K562 (cell line): ENCODE measurements at regions of chr7 and their contacts with region 1.

Region 1: DNA sequence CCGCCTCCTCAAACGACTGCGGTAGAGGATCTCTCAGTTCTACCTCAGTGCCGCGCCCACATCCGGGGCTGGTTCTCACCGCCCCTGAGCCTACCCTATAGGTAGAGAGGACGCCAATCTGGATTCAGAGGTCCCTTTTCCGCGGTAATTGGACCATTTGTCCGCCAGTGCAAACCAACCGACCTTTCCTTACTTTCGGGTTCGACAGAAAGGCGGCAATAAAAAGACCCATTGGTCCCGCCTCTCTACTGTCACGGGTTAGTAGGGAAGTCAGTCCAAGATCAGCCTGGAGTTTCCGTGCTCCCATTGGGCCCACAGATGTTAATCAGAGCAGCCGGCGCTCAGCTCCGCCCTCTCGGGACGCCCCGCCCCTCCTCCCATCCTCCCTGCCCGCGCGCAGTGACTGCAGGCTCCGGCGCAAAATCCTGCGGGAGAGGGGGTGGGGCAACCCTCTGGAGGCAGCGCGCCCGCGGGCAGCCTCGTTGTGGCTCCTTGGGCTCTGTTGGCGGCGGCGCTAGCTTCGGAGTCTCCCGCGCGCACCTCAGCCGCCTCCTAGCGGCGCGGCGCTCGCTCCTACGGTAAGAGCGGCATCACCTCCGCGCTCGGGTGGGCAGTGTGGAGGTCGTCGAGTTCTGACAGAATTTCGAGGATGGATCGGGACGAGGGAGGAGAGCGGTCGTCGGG is at the starts of genes PHTF2 and TMEM60:
- DNase-seq: peak; percentile 96 to 99 (median 97)
- ATAC-seq: peak; percentile 90
- H3K4me3 ChIP-seq: peak within 1 kb of the TSS; percentile 75
- H3K27ac ChIP-seq: peak within 1 kb of the TSS; percentile 86
- H3K4me1 ChIP-seq: peaks cover 16 to 24% of the 10 kb centered on the region in 2 experiments; a peak in 4 of 5 replicates
- H3K27me3 ChIP-seq: no peaks in the 10 kb centered on the region
- CTCF ChIP-seq: peak; percentile 55 to 69 (median 64)
- EP300 ChIP-seq: peak; percentile 47; the same call in 1 of the 2 replicates
- POLR2A ChIP-seq: peak; percentile 76
- RAD21 ChIP-seq: peak; percentile 47 to 60
- polyA plus RNA-seq, gene PHTF2: 17.9 to 18.2 TPM
- polyA plus RNA-seq, gene TMEM60: 136 to 140 TPM

Region 2: DNA sequence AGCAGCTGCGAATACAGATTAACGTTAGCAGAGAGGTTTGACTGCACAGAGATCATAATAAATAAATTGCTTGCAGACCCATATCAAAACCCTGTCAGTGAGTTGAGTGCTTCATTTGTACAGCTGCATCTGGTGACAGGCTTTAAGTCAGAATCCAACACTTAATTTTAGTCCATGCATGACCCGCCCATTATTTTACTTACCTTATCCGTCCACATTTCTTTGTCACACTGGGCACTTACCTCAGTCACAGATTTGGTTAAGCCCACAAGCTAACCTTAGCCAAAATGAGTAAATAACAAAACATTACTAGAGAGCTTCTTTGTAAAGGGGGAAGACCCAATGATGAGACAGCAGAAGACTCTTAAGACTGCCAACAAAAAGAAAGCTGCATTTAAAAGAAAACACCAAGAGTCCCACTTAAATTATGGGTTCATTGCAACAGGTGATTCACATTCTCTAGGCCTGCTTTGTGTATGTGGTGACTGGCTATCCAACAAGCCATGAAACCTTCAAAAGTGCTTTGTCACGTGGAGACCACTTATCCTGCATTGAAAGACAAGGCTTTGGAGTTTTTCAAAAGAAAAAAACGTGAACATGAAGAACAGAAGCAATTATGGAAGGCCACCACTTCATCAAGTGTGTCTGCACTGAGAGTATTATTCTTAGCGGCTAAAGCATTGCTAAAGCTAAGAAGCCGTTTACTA is 32.3 kb after region 1 on chr7:
- CTCF ChIA-PET with region 1: no interaction called
- POLR2A ChIA-PET with region 1: interaction called, 7 read pairs
- in situ Hi-C with region 1: no loop called
- intact Hi-C with region 1: loop called (anchors 1 kb)
- DNase-seq: peak in 1 of 4 experiments; percentile 62
- ATAC-seq: peak; percentile 55
- H3K4me3 ChIP-seq: no peak overlapping the region
- H3K27ac ChIP-seq: peak overlapping the region; percentile 58; the same call in 2 of the 3 replicates
- H3K4me1 ChIP-seq: peaks cover 4 to 51% of the 10 kb centered on the region in 2 experiments; a peak in 4 of 5 replicates
- H3K27me3 ChIP-seq: no peaks in the 10 kb centered on the region
- CTCF ChIP-seq: no peak
- EP300 ChIP-seq: no peak
- POLR2A ChIP-seq: no peak
- RAD21 ChIP-seq: no peak

Region 3: GRCh38 chr7:77843194-77843593 is 44.7 kb after region 1 on chr7:
- CTCF ChIA-PET with region 1: no interaction called
- POLR2A ChIA-PET with region 1: interaction called, 4 read pairs
- in situ Hi-C with region 1: no loop called
- intact Hi-C with region 1: loop called (anchors 2 kb)
- DNase-seq: peak in 1 of 4 experiments; percentile 63
- ATAC-seq: peak; percentile 19
- H3K4me3 ChIP-seq: no peak overlapping the region
- H3K27ac ChIP-seq: peak overlapping the region; percentile 50; the same call in 1 of the 3 replicates
- H3K4me1 ChIP-seq: peaks cover 12 to 35% of the 10 kb centered on the region in 2 experiments
- H3K27me3 ChIP-seq: no peaks in the 10 kb centered on the region
- CTCF ChIP-seq: no peak
- EP300 ChIP-seq: 0 out of 2 replicates have a peak, but pooled peaks have one; percentile 20
- POLR2A ChIP-seq: no peak
- RAD21 ChIP-seq: no peak

Region 4: DNA sequence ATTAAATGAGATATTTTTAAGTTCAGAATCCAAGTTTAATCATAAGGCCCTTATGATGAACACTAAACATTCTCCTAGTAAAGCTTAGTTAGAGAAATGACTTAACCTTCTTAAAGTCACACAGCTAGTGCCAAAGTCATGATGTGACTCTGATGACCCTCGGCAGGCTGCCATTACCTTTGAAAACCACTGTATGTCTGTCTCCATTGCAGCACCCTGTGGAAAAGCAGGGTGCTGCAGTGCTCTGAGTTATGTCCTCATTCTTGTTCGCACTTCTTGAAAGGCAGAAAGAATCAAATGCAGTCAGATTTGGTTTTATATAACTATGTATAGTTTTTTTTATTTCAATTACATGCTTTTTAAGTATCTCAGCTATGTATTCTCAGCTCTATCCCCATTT is 105.1 kb after region 1 on chr7:
- CTCF ChIA-PET with region 1: no interaction called
- POLR2A ChIA-PET with region 1: interaction called, 3 read pairs
- in situ Hi-C with region 1: no loop called
- intact Hi-C with region 1: loop called (anchors 1 kb)
- DNase-seq: peak in 2 of 4 experiments; percentile 62 to 73
- ATAC-seq: peak; percentile 88
- H3K4me3 ChIP-seq: no peak overlapping the region
- H3K27ac ChIP-seq: no peak overlapping the region
- H3K4me1 ChIP-seq: peaks cover 5 to 16% of the 10 kb centered on the region in 2 experiments; a peak in 3 of 5 replicates
- H3K27me3 ChIP-seq: no peaks in the 10 kb centered on the region
- CTCF ChIP-seq: peak; percentile 56 to 73 (median 68)
- EP300 ChIP-seq: no peak
- POLR2A ChIP-seq: no peak
- RAD21 ChIP-seq: peak; percentile 42 to 72